Calu3 (cell line): ENCODE measurements at regions of chr1 and their contacts with region 1.

Region 1: GRCh38 chr1:8202182-8202905 is 115.6 kb upstream of the SLC45A1 start:
- DNase-seq: peak; percentile 74
- H3K4me3 Mint-ChIP-seq: peak overlapping the region; percentile 31
- H3K27ac Mint-ChIP-seq: peak overlapping the region; percentile 82
- H3K4me1 Mint-ChIP-seq: peaks cover 50% of the 10 kb centered on the region
- H3K27me3 Mint-ChIP-seq: no peaks in the 10 kb centered on the region
- CTCF ChIP-seq: no peak

Region 2: DNA sequence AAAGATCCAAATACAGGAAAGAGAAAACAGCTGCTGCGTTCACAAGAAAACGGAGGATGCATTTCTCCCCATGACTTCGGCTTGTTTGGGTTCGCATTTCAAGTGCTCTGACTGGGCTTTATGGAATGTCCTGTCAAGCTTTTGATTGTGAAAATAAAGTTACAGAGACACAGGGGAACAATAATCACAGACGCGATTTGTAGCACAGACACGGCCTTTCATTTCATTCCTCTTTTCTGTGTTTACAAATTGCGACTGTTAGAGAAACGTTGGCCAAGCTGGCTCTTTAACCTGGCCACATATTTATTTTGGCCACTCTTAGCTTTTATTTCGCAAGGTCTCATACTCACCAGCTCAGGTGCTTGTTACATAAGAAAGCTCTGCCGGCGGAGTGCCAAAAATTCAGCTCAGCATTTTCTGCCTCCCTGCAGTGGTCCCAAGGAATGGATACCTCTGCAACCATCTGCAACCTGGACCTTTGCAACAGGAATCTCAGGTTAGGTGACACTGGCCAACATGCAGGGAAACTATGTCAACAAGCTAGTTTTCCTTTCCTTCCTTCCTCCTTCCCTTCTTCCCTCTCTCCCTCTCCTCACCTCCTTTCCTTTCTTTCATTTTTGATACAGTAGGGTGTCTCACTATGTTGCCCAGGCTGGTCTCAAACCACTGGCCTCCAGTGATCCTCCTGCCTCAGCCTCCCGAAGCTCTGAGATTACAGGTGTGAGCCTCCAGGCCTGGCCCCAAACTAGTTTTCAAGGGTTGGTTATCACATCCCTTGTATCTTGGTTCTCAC is 57.4 kb after region 1 on chr1:
- CTCF ChIA-PET with region 1: interaction called, 4 read pairs
- intact Hi-C with region 1: loop called (anchors 5 kb)
- DNase-seq: peak; percentile 66
- H3K4me3 Mint-ChIP-seq: peak overlapping the region; percentile 10
- H3K27ac Mint-ChIP-seq: peak overlapping the region; percentile 82
- H3K4me1 Mint-ChIP-seq: peaks cover 38% of the 10 kb centered on the region
- H3K27me3 Mint-ChIP-seq: no peaks in the 10 kb centered on the region
- CTCF ChIP-seq: no peak